Activated CD4-positive, alpha-beta memory T cell treated with anti-CD3 and anti-CD28 coated beads for 36 hours (primary cell): ENCODE measurements at regions of chr3 and their contacts with region 1.

Region 1: DNA sequence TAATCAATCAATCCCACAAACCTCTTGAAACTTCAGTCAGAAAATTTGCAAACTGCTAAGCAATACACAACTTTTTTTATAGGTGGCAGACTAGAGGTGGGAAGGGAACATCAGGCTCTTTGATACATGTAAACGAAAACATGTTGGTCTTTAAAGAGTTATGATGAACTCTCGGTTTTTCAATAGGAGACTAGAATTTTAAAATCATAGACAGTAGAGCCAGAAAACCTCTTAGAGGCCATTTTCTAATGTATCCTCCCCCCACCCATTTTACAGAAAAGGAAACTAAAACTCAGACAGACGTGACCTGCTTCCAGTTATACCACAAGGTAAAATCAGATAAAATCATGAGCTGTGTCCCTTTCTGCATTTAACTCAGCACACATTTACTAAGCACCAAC is 179.1 kb upstream of the LPP start:
- DNase-seq: no peak
- H3K4me3 Mint-ChIP-seq: peak overlapping the region; percentile 62
- H3K27ac Mint-ChIP-seq: peak overlapping the region; percentile 92
- H3K4me1 Mint-ChIP-seq: peaks cover 63% of the 10 kb centered on the region
- H3K27me3 Mint-ChIP-seq: no peaks in the 10 kb centered on the region

Region 2: DNA sequence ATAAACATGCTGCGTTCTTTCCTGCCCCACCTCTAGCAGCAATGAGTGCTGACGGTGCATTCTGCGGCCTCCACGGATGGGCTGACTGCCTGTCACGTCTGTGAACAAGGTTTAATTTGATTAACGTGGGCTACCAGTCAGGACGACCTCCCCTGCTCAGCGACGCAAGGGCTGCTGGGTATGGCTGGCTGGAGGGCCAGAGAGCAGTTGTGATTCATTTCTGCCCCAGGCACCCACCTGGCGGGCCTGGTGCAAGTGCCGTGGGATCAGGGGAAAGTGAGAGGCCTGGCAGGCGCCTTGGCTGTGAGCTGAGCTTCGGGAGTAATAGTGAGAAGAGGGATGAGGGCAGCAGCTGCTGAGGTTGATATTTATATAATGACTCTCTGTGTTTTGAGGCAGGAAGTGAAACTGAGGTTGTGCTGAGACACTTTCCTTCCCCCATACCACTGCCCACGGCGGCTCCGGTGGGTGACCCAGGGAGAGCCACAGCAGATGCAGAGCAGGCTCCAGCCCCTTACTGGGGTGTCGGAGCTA is 39.2 kb before region 1 on chr3:
- CTCF ChIA-PET with region 1: no interaction called
- POLR2A ChIA-PET with region 1: no interaction called
- intact Hi-C with region 1: loop called (anchors 1 kb)
- DNase-seq: peak; percentile 78
- H3K4me3 Mint-ChIP-seq: no peak overlapping the region
- H3K27ac Mint-ChIP-seq: peak overlapping the region; percentile 61
- H3K4me1 Mint-ChIP-seq: peaks cover 40% of the 10 kb centered on the region
- H3K27me3 Mint-ChIP-seq: peaks cover 4% of the 10 kb centered on the region

Region 3: GRCh38 chr3:188000361-188000861 is 25.5 kb after region 1 on chr3:
- CTCF ChIA-PET with region 1: no interaction called
- POLR2A ChIA-PET with region 1: interaction called, 5 read pairs
- intact Hi-C with region 1: loop called (anchors 1 kb)
- DNase-seq: no peak
- H3K4me3 Mint-ChIP-seq: peak overlapping the region; percentile 58
- H3K27ac Mint-ChIP-seq: peak overlapping the region; percentile 90
- H3K4me1 Mint-ChIP-seq: peaks cover 58% of the 10 kb centered on the region
- H3K27me3 Mint-ChIP-seq: no peaks in the 10 kb centered on the region

Region 4: GRCh38 chr3:188154014-188154808 is 179.3 kb after region 1 on chr3 and contains the start of gene LPP:
- CTCF ChIA-PET with region 1: no interaction called
- POLR2A ChIA-PET with region 1: interaction called, 3 read pairs
- intact Hi-C with region 1: loop called (anchors 2 kb)
- DNase-seq: peak; percentile 91
- H3K4me3 Mint-ChIP-seq: peak within 1 kb of the TSS; percentile 88
- H3K27ac Mint-ChIP-seq: peak within 1 kb of the TSS; percentile 97
- H3K4me1 Mint-ChIP-seq: peaks cover 63% of the 10 kb centered on the region
- H3K27me3 Mint-ChIP-seq: no peaks in the 10 kb centered on the region
- total RNA-seq, gene LPP: 41.0 to 43.6 TPM

Region 5: GRCh38 chr3:188294823-188295487 is 320.1 kb after region 1 on chr3:
- CTCF ChIA-PET with region 1: no interaction called
- POLR2A ChIA-PET with region 1: interaction called, 5 read pairs
- intact Hi-C with region 1: loop called (anchors 5 kb)
- DNase-seq: no peak
- H3K4me3 Mint-ChIP-seq: no peak overlapping the region
- H3K27ac Mint-ChIP-seq: peak overlapping the region; percentile 72
- H3K4me1 Mint-ChIP-seq: peaks cover 79% of the 10 kb centered on the region
- H3K27me3 Mint-ChIP-seq: no peaks in the 10 kb centered on the region

Region 6: DNA sequence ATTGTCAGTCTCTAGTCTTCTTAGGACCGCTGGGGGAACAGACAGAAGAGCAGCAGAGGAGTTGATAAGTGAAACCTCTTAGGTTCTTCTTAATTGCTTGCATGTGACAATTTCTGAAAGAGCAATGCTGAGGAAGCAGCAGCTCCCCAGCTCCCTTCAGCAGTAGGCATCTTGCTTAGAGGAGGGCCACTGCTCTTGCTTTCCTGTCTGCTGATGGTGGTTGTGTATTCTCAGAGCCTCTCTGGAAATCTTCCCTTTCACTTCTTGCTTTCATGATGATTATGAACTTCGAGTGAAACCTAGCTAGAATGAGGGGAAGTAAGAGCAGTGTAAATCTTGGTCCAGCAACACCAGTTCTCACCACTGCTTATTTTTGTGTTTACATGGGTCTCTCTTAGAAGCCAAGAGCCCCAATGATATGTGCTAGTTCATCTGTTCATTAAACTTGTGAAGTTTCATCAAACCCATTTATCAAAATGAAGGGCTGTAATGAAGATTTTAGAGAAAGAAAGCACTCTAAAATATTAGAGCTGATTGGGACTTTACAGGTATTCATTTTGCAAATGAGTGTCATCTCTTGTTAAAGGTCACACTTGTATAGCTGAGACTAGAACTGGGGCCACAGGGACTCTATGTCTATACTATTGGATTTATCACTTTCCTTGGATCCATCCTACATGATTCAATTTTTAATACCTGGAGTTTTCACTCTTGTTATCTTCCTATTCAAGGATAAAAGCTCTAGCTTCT is 425.8 kb after region 1 on chr3:
- CTCF ChIA-PET with region 1: no interaction called
- POLR2A ChIA-PET with region 1: no interaction called
- intact Hi-C with region 1: loop called (anchors 5 kb)
- DNase-seq: peak; percentile 48
- H3K4me3 Mint-ChIP-seq: no peak overlapping the region
- H3K27ac Mint-ChIP-seq: peak overlapping the region; percentile 4
- H3K4me1 Mint-ChIP-seq: peaks cover 68% of the 10 kb centered on the region
- H3K27me3 Mint-ChIP-seq: no peaks in the 10 kb centered on the region